Dendritic cell treated with granulocyte-macrophage colony-stimulating factor and Interleukin-4, amounts not matched to agents 40 ng/mL and 50 ng/mL, for 4 days (primary cell): ENCODE measurements at regions of chr14 and their contacts with region 1.

Region 1: GRCh38 chr14:67426983-67427606 is 15.1 kb upstream of the PLEK2 start:
- H3K4me3 Mint-ChIP-seq: no peak overlapping the region
- H3K27ac Mint-ChIP-seq: no peak overlapping the region
- H3K4me1 Mint-ChIP-seq: peaks cover 18% of the 10 kb centered on the region
- H3K27me3 Mint-ChIP-seq: peaks cover 43% of the 10 kb centered on the region

Region 2: DNA sequence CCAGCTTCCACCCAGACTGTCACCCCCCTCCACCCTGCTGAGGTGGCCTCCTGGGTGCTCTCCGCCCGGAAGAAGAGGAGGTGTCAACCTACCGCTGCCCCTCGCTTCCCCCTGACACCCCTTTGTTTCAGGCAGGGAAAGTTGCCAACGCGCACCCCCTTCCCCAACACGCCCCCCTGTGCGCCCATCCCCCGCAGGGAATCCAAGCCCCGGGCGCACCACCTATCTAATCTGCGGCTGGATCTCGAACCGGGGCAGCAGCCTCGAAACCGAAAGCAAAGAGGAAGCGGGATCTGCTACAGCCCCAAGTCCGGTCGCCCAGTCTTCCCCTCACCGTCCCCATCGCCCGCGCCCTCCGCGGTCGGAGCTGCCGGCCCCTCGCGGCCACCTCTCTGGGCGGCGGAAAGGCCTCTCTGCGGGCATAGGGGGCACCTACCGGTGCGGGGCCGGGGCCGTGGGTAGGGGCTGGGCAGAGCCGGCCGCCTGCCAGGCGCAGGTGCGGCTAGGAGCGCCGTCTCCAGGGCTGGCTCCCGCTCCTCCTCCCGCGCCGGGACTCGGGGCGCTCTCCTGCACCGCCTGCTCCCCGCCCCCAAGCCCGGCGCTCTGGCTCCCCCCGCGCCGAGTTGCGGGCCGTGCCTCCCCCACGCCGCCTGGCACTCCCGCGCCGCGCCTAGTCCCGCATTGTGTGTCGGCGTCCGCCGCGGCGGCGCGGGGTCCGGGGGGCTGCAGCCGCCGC is 87.7 kb after region 1 on chr14:
- intact Hi-C with region 1: loop called (anchors 10 kb)
- H3K4me3 Mint-ChIP-seq: peak overlapping the region; percentile 94
- H3K27ac Mint-ChIP-seq: peak overlapping the region; percentile 90
- H3K4me1 Mint-ChIP-seq: peaks cover 27% of the 10 kb centered on the region
- H3K27me3 Mint-ChIP-seq: peaks cover 20% of the 10 kb centered on the region